PC-3 (cell line): ENCODE measurements at regions of chr6 and their contacts with region 1.

Region 1: GRCh38 chr6:26216356-26216885 is 129.2 kb downstream of the HFE start:
- DNase-seq: peak; percentile 99
- ATAC-seq: peak; percentile 64
- H3K4me3 ChIP-seq: peak overlapping the region; percentile 86
- H3K27ac ChIP-seq: peak overlapping the region; percentile 63
- H3K4me1 ChIP-seq: peaks cover 6% of the 10 kb centered on the region; the same call in 1 of the 2 replicates
- H3K27me3 ChIP-seq: no peaks in the 10 kb centered on the region
- CTCF ChIP-seq: no peak

Region 2: GRCh38 chr6:26045065-26045927 is 171.1 kb before region 1 on chr6:
- CTCF ChIA-PET with region 1: no interaction called
- POLR2A ChIA-PET with region 1: interaction called, 12 read pairs
- intact Hi-C with region 1: no loop called
- DNase-seq: peak; percentile 98
- ATAC-seq: peak; percentile 57
- H3K4me3 ChIP-seq: peak overlapping the region; percentile 71
- H3K27ac ChIP-seq: peak overlapping the region; percentile 74
- H3K4me1 ChIP-seq: peaks cover 21% of the 10 kb centered on the region
- H3K27me3 ChIP-seq: no peaks in the 10 kb centered on the region
- CTCF ChIP-seq: peak; percentile 36; the same call in 1 of the 2 replicates

Region 3: DNA sequence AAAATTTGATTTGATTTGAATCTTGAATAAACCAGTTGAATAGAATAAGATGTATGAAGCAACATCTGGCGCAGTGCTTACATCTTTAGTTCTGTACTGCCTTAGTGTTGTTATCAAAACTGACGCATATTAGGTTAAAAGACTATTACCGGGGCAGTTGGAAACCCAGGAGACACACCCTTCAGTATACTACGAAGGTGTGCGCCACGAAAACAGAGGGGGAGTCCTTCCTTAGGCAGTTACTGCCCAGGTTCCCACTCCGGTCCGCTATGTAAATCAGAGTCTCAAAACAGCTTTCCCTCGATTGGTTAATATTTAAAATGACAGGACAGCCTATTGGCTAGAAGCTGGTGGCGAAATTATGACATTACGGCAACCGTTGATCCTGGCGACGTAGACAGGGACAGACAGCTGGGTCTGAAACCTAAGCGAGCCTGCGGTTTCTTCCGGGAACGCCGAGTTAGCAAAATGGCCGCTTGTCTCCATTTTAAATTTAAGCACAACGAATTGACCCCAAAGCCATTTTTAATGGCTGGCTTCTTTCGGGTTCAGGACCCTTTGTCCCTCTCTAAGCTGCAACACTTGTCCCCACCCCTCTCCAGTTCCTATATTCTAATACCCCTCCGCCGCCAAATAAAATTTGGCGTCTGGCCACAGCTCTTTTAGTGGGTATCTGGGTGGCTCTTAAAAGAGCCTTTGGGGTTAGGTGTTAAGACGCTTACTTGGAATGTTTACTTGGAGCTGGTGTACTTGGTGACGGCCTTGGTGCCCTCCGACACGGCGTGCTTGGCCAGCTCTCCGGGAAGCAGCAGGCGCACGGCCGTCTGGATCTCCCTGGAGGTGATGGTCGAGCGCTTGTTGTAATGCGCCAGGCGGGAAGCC is 93.4 kb before region 1 on chr6:
- CTCF ChIA-PET with region 1: no interaction called
- POLR2A ChIA-PET with region 1: interaction called, 66 read pairs
- intact Hi-C with region 1: loop called (anchors 1 kb)
- DNase-seq: peak; percentile 99
- ATAC-seq: peak; percentile 50
- H3K4me3 ChIP-seq: peak overlapping the region; percentile 96
- H3K27ac ChIP-seq: peak overlapping the region; percentile 94
- H3K4me1 ChIP-seq: peaks cover 49% of the 10 kb centered on the region
- H3K27me3 ChIP-seq: no peaks in the 10 kb centered on the region
- CTCF ChIP-seq: no peak

Region 4: DNA sequence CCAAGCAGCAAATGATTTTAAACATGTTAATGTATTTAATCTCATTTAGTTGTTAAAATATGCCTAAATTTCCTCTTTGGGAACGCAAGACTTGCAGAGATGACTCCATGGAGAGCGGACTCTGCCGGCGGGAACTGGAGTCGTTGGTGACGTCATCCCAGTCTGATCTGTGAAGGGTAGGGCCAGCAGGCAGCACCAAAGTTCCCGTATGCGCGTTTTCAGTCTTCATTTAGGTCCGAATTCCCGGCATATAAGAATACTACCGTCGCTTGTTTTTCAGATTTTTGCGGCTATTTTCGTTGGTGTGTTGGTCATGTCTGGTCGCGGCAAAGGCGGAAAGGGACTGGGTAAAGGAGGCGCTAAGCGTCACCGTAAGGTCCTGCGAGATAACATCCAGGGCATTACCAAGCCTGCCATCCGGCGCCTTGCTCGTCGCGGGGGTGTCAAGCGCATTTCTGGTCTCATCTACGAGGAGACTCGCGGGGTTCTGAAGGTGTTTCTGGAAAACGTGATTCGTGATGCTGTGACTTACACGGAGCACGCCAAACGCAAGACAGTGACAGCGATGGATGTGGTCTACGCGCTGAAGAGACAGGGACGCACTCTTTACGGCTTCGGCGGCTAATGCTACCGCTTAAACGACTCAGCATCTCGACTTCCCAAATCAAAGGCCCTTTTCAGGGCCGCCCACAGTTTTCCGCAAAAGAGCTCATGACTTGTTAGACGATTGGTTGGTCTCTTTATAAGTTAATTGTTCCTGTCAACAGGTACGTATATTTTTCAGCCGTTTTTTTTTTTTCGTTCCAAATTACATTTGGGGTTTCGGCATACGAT is 11.9 kb before region 1 on chr6:
- CTCF ChIA-PET with region 1: interaction called, 3 read pairs
- POLR2A ChIA-PET with region 1: interaction called, 68 read pairs
- intact Hi-C with region 1: loop called (anchors 1 kb)
- DNase-seq: peak; percentile 98
- ATAC-seq: peak; percentile 59
- H3K4me3 ChIP-seq: peak overlapping the region; percentile 85
- H3K27ac ChIP-seq: peak overlapping the region; percentile 82
- H3K4me1 ChIP-seq: peaks cover 15% of the 10 kb centered on the region
- H3K27me3 ChIP-seq: no peaks in the 10 kb centered on the region
- CTCF ChIP-seq: peak; percentile 44

Region 5: DNA sequence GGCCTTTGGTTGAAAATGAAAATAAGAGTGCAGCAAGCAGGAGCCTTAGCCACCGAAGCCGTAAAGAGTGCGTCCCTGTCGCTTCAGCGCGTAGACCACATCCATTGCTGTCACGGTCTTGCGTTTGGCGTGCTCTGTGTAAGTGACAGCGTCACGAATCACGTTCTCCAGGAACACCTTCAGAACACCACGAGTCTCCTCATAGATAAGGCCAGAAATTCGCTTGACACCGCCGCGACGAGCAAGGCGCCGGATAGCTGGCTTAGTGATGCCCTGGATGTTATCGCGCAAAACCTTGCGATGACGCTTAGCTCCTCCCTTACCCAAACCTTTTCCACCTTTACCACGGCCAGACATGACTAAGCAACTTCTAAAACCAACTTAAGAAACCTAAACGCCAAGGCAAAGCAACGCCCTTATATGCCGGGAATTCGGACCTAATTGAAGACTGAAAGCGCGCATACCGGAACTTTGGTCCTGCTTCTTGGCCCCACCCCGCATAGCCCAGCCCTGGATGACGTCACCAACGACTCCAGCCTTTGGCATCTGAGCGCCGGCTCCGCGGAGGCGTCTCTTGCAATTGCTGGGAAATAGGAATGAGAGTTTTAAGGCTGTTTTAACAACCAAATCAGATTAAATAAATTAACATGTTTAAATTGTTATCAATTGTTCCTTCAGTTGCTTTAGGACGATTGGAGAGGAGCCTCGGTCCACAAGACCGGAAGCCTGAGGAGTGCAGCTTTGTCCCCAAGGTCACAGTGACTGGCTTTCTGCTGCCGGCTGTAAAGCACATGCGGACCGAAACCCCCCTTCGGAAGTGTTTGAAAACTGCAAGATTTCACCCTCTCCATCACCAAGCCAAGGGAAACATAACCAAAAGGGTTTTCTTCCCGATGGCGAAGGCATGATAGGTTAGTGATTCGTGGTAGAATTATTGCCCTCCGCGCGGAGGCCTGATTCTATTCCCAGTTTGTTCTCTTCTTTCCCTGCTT is 69.0 kb after region 1 on chr6:
- CTCF ChIA-PET with region 1: no interaction called
- POLR2A ChIA-PET with region 1: interaction called, 72 read pairs
- intact Hi-C with region 1: loop called (anchors 1 kb)
- DNase-seq: peak; percentile 100
- ATAC-seq: peak; percentile 77
- H3K4me3 ChIP-seq: peak overlapping the region; percentile 92
- H3K27ac ChIP-seq: peak overlapping the region; percentile 94
- H3K4me1 ChIP-seq: peaks cover 19% of the 10 kb centered on the region
- H3K27me3 ChIP-seq: no peaks in the 10 kb centered on the region
- CTCF ChIP-seq: no peak

Region 6: GRCh38 chr6:26640806-26641205 is 424.4 kb after region 1 on chr6:
- CTCF ChIA-PET with region 1: no interaction called
- POLR2A ChIA-PET with region 1: no interaction called
- intact Hi-C with region 1: no loop called
- DNase-seq: no peak
- ATAC-seq: no peak
- H3K4me3 ChIP-seq: no peak overlapping the region
- H3K27ac ChIP-seq: no peak overlapping the region
- H3K4me1 ChIP-seq: no peaks in the 10 kb centered on the region
- H3K27me3 ChIP-seq: no peaks in the 10 kb centered on the region
- CTCF ChIP-seq: no peak